MCF 10A (cell line): ENCODE measurements at regions of chr3 and their contacts with region 1.

Region 1: GRCh38 chr3:157865352-157866000 is 240.7 kb downstream of the SHOX2 start:
- DNase-seq: peak; percentile 52
- H3K4me3 Mint-ChIP-seq: no peak overlapping the region
- H3K27ac Mint-ChIP-seq: no peak overlapping the region
- H3K4me1 Mint-ChIP-seq: no peaks in the 10 kb centered on the region
- H3K27me3 Mint-ChIP-seq: no peaks in the 10 kb centered on the region
- CTCF ChIP-seq: peak; percentile 64

Region 2: GRCh38 chr3:157294491-157294890 is 571.0 kb before region 1 on chr3:
- CTCF ChIA-PET with region 1: no interaction called
- POLR2A ChIA-PET with region 1: no interaction called
- intact Hi-C with region 1: no loop called
- DNase-seq: no peak
- H3K4me3 Mint-ChIP-seq: no peak overlapping the region
- H3K27ac Mint-ChIP-seq: no peak overlapping the region
- H3K4me1 Mint-ChIP-seq: peaks cover 11% of the 10 kb centered on the region
- H3K27me3 Mint-ChIP-seq: no peaks in the 10 kb centered on the region
- CTCF ChIP-seq: no peak

Region 3: GRCh38 chr3:158097593-158098308 is 232.3 kb after region 1 on chr3:
- CTCF ChIA-PET with region 1: no interaction called
- POLR2A ChIA-PET with region 1: no interaction called
- intact Hi-C with region 1: loop called (anchors 10 kb)
- DNase-seq: peak; percentile 74
- H3K4me3 Mint-ChIP-seq: peak overlapping the region; percentile 84
- H3K27ac Mint-ChIP-seq: peak overlapping the region; percentile 58
- H3K4me1 Mint-ChIP-seq: peaks cover 6% of the 10 kb centered on the region
- H3K27me3 Mint-ChIP-seq: no peaks in the 10 kb centered on the region
- CTCF ChIP-seq: no peak

Region 4: DNA sequence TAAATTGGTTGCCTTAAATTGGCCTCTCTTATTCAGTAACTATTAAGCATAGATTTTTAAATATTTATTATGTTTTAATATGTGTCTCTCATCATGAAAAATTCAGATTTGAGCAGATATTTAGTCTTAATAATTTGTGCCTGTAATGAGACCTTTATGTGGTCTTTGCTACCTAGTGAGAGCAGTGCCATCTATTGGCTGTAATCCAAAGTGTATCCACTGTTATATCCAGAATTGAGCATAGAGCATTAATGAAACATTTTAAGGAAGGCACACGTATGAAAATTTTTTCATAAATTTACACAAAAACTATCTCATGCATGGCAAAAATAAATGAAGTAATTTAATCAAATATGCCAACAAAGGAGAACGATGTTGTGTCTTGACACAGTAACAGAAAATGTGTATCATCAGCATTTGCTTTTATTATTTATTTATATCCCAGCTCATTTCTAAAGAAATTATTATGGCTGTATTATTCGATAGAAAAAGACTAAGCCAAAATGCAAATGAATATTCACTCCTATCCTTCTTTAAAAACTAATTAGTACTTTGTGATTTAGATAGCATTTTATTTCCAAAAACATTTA is 448.0 kb after region 1 on chr3:
- CTCF ChIA-PET with region 1: interaction called, 4 read pairs
- POLR2A ChIA-PET with region 1: no interaction called
- intact Hi-C with region 1: loop called (anchors 1 kb)
- DNase-seq: peak; percentile 52
- H3K4me3 Mint-ChIP-seq: no peak overlapping the region
- H3K27ac Mint-ChIP-seq: peak overlapping the region; percentile 25
- H3K4me1 Mint-ChIP-seq: peaks cover 5% of the 10 kb centered on the region
- H3K27me3 Mint-ChIP-seq: no peaks in the 10 kb centered on the region
- CTCF ChIP-seq: peak; percentile 38

Region 5: GRCh38 chr3:158532099-158532734 is 666.7 kb after region 1 on chr3:
- CTCF ChIA-PET with region 1: no interaction called
- POLR2A ChIA-PET with region 1: no interaction called
- intact Hi-C with region 1: loop called (anchors 5 kb)
- DNase-seq: peak; percentile 77
- H3K4me3 Mint-ChIP-seq: no peak overlapping the region
- H3K27ac Mint-ChIP-seq: no peak overlapping the region
- H3K4me1 Mint-ChIP-seq: peaks cover 7% of the 10 kb centered on the region
- H3K27me3 Mint-ChIP-seq: no peaks in the 10 kb centered on the region
- CTCF ChIP-seq: peak; percentile 64